Activated CD4-positive, alpha-beta T cell treated with anti-CD3 and anti-CD28 coated beads for 36 hours (primary cell): ENCODE measurements at regions of chr1 and their contacts with region 1.

Region 1: GRCh38 chr1:41374711-41375110 is 13.5 kb downstream of the FOXO6 start:
- DNase-seq: no peak
- ATAC-seq: no peak
- H3K4me3 Mint-ChIP-seq: no peak overlapping the region
- H3K27ac Mint-ChIP-seq: no peak overlapping the region
- H3K4me1 Mint-ChIP-seq: no peaks in the 10 kb centered on the region
- H3K27me3 Mint-ChIP-seq: peaks cover 24% of the 10 kb centered on the region

Region 2: GRCh38 chr1:41230656-41231055 is 144.1 kb before region 1 on chr1:
- CTCF ChIA-PET with region 1: no interaction called
- POLR2A ChIA-PET with region 1: interaction called, 10 read pairs
- intact Hi-C with region 1: no loop called
- DNase-seq: no peak
- ATAC-seq: no peak
- H3K4me3 Mint-ChIP-seq: no peak overlapping the region
- H3K27ac Mint-ChIP-seq: no peak overlapping the region
- H3K4me1 Mint-ChIP-seq: peaks cover 4% of the 10 kb centered on the region
- H3K27me3 Mint-ChIP-seq: no peaks in the 10 kb centered on the region

Region 3: DNA sequence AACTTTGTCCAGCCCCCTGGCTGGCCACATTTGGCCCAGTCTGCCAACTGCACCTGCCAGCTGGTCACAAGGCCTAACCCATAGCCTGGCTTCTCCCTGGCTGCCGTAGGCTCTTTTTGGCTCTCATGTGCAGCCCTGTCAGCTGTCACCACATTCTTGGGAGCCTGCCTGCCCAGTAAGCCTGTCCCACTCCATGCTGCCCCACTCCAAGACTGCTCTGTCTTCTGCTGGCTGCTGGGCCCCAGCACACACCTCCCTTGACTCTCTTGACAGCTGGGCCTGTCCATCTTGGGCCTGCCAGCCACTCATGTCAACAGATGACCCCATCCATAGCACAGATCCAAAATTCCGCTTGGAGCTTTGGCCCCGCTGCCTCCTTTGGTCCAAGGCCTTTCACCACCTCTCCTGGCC is 184.1 kb after region 1 on chr1:
- CTCF ChIA-PET with region 1: no interaction called
- POLR2A ChIA-PET with region 1: no interaction called
- intact Hi-C with region 1: no loop called
- DNase-seq: no peak
- ATAC-seq: no peak
- H3K4me3 Mint-ChIP-seq: no peak overlapping the region
- H3K27ac Mint-ChIP-seq: no peak overlapping the region
- H3K4me1 Mint-ChIP-seq: peaks cover 3% of the 10 kb centered on the region
- H3K27me3 Mint-ChIP-seq: no peaks in the 10 kb centered on the region

Region 4: GRCh38 chr1:41678111-41678878 is 303.6 kb after region 1 on chr1:
- CTCF ChIA-PET with region 1: no interaction called
- POLR2A ChIA-PET with region 1: no interaction called
- intact Hi-C with region 1: no loop called
- DNase-seq: no peak
- ATAC-seq: peak; percentile 53
- H3K4me3 Mint-ChIP-seq: no peak overlapping the region
- H3K27ac Mint-ChIP-seq: peak overlapping the region; percentile 59
- H3K4me1 Mint-ChIP-seq: peaks cover 66% of the 10 kb centered on the region
- H3K27me3 Mint-ChIP-seq: no peaks in the 10 kb centered on the region